Cardiac septum (tissue), 1 donor: ENCODE measurements at regions of chr1 and their contacts with region 1.

Region 1: DNA sequence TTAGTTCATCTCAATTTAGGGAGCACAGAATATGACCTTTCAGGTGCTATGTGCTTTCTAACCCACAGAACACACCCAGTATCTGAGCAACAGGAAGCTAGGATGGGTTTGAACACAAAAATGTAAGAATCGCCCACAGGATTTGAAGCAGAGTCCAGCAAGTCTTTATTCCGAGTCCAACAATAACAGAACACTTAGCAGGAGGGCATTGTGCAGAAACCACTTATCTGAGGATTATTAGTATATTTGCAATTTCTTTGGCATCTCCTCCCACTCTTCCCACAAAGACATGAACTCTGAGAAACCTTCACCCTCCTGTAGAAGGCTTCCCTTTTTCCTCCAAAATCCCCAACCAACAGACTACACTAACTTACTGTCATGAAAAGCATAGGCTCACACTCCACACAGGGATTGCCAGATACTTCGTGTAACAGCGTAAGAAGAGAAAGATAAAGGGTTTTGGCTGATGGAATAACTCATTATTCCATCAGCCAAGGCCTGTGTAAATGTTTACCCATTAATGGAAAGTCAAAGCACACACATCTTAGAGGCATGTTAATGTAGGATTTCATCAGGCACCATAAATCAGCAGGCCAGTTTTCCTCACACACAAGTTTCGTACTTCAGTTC is 16.1 kb downstream of the SIPA1L2 start:
- DNase-seq: no peak

Region 2: GRCh38 chr1:232599178-232600041 is 14.5 kb before region 1 on chr1:
- intact Hi-C with region 1: loop called (anchors 2 kb)
- DNase-seq: no peak

Region 3: DNA sequence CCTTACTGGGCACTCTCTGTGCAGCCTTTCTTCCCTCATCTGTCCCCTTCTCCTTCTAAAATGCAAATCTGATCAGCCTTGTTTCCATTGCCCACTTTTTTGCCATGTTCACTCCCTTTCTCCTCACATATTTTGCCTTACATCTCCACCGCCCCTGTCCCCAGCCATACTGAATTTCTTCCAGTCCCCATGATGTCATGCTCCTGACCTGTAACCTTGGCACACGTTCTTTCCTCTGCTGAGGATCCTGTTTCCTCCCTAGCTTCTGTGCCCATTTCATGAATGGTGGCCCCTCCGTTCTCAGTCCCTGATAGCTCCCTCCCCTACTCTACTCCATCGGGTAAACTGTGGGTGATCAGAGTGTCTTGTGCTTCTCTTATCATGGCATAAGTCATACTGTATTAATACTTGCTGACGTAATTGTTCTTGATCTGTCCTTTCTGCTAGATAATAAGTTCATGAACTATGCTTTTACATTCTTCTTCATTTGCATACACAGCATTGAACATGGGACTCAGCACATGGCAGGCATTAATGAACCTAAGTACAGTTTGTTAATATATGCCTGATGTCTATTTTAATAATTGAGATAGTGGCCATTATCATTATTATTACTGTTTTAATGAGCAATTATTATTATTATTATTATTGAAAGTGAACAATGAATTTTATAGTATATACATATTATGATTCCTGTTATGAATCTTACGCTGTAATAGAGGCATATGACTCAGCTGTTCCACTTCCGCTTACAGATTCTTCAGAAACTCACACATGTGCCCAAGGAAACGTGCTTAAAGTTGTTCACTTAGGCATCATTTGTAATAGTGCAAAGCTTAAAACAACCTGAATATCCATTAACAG is 742.2 kb after region 1 on chr1:
- intact Hi-C with region 1: no loop called
- DNase-seq: no peak